Heart right ventricle (tissue), 16 donors: ENCODE measurements at regions of chr1 and their contacts with region 1.

Region 1: GRCh38 chr1:192808518-192809306 is at the start of gene RGS2:
- DNase-seq: peak; percentile 89 to 92
- ATAC-seq: peak; percentile 97 to 100 (median 98)
- H3K4me3 ChIP-seq: peak within 1 kb of the TSS; percentile 56 to 94 (median 74)
- H3K27ac ChIP-seq: peak within 1 kb of the TSS; percentile 60 to 94 (median 88)
- H3K4me1 ChIP-seq: peaks cover 0 to 59% (median 23%) of the 10 kb centered on the region in 9 donors
- H3K27me3 ChIP-seq: no peaks in the 10 kb centered on the region
- CTCF ChIP-seq: peak in 5 of 9 donors; percentile 21 to 51 (median 29)
- total RNA-seq, gene RGS2: 12.2 to 30.8 (median 17.4) TPM

Region 2: DNA sequence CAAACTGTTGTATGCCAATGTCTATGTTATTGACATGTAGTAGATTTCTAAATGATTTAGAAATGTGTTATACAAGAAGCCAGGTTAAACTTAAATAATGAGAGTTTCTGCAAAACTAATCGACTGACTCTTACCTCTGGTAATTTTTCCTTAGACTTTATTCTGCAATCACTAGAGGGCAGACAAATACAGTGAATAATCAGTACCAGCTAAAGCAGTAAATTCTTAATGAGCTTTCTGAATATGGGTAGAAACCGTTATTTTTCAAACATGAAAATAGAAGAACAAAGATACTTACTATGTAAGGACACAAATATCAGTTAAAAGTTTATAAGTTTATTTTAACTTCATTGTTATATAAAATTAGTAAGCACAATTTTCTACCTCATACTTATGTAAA is 331.1 kb before region 1 on chr1:
- intact Hi-C with region 1: loop called in 5 of 10 experiments (anchors 2 to 10 kb)
- DNase-seq: no peak
- ATAC-seq: peak in 7 of 8 donors; percentile 39 to 81 (median 76)
- H3K4me3 ChIP-seq: no peak overlapping the region
- H3K27ac ChIP-seq: peak overlapping the region in 1 of 10 donors; percentile 8
- H3K4me1 ChIP-seq: peaks cover 0 to 14% (median 0%) of the 10 kb centered on the region in 9 donors
- H3K27me3 ChIP-seq: peaks cover 0 to 11% (median 0%) of the 10 kb centered on the region in 7 donors
- CTCF ChIP-seq: peak in 8 of 9 donors; percentile 26 to 73 (median 63)

Region 3: GRCh38 chr1:192626366-192627179 is 182.1 kb before region 1 on chr1:
- intact Hi-C with region 1: loop called in 2 of 10 experiments (anchors 5 to 10 kb)
- DNase-seq: no peak
- ATAC-seq: peak in 3 of 8 donors; percentile 71 to 88 (median 79)
- H3K4me3 ChIP-seq: no peak overlapping the region
- H3K27ac ChIP-seq: no peak overlapping the region
- H3K4me1 ChIP-seq: peaks cover 0 to 37% (median 15%) of the 10 kb centered on the region in 9 donors
- H3K27me3 ChIP-seq: no peaks in the 10 kb centered on the region
- CTCF ChIP-seq: no peak

Region 4: GRCh38 chr1:192879406-192879805 is 70.7 kb after region 1 on chr1:
- intact Hi-C with region 1: loop called in 1 of 10 experiments (anchors 2 kb)
- DNase-seq: peak in 1 of 2 donors; percentile 12
- ATAC-seq: peak; percentile 58 to 94 (median 90)
- H3K4me3 ChIP-seq: no peak overlapping the region
- H3K27ac ChIP-seq: peak overlapping the region in 8 of 10 donors; percentile 17 to 71 (median 54)
- H3K4me1 ChIP-seq: peaks cover 0 to 39% (median 26%) of the 10 kb centered on the region in 9 donors
- H3K27me3 ChIP-seq: no peaks in the 10 kb centered on the region
- CTCF ChIP-seq: peak in 5 of 9 donors; percentile 19 to 38 (median 23)

Region 5: GRCh38 chr1:193025218-193025617 is 216.5 kb after region 1 on chr1:
- intact Hi-C with region 1: loop called in 5 of 10 experiments (anchors 2 to 10 kb)
- DNase-seq: no peak
- ATAC-seq: peak in 1 of 8 donors; percentile 25
- H3K4me3 ChIP-seq: no peak overlapping the region
- H3K27ac ChIP-seq: no peak overlapping the region
- H3K4me1 ChIP-seq: peaks cover 0 to 2% (median 0%) of the 10 kb centered on the region in 9 donors
- H3K27me3 ChIP-seq: no peaks in the 10 kb centered on the region
- CTCF ChIP-seq: no peak